ENCODE measurements at regions of chr2 and their contacts with region 1.

Region 1: DNA sequence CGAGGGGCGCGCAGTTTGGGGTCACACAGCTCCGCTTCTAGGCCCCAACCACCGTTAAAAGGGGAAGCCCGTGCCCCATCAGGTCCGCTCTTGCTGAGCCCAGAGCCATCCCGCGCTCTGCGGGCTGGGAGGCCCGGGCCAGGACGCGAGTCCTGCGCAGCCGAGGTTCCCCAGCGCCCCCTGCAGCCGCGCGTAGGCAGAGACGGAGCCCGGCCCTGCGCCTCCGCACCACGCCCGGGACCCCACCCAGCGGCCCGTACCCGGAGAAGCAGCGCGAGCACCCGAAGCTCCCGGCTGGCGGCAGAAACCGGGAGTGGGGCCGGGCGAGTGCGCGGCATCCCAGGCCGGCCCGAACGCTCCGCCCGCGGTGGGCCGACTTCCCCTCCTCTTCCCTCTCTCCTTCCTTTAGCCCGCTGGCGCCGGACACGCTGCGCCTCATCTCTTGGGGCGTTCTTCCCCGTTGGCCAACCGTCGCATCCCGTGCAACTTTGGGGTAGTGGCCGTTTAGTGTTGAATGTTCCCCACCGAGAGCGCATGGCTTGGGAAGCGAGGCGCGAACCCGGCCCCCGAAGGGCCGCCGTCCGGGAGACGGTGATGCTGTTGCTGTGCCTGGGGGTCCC is at the start of gene ITGA4:
- DNase-seq: peak; percentile 92
- ATAC-seq: peak; percentile 82
- H3K4me3 Mint-ChIP-seq: peak within 1 kb of the TSS; percentile 99
- H3K27ac Mint-ChIP-seq: peak within 1 kb of the TSS; percentile 97
- H3K4me1 Mint-ChIP-seq: peaks cover 30% of the 10 kb centered on the region
- H3K27me3 Mint-ChIP-seq: no peaks in the 10 kb centered on the region
- total RNA-seq, gene ITGA4: 301 to 344 TPM

Region 2: GRCh38 chr2:181123798-181124231 is 333.4 kb before region 1 on chr2:
- CTCF ChIA-PET with region 1: interaction called, 16 read pairs
- DNase-seq: peak; percentile 89
- ATAC-seq: peak; percentile 88
- H3K4me3 Mint-ChIP-seq: peak overlapping the region; percentile 73
- H3K27ac Mint-ChIP-seq: peak overlapping the region; percentile 92
- H3K4me1 Mint-ChIP-seq: peaks cover 72% of the 10 kb centered on the region
- H3K27me3 Mint-ChIP-seq: no peaks in the 10 kb centered on the region

Region 3: GRCh38 chr2:181146171-181146570 is 311.1 kb before region 1 on chr2:
- CTCF ChIA-PET with region 1: interaction called, 10 read pairs
- DNase-seq: peak; percentile 65
- ATAC-seq: peak; percentile 59
- H3K4me3 Mint-ChIP-seq: peak overlapping the region; percentile 18
- H3K27ac Mint-ChIP-seq: peak overlapping the region; percentile 86
- H3K4me1 Mint-ChIP-seq: peaks cover 68% of the 10 kb centered on the region
- H3K27me3 Mint-ChIP-seq: no peaks in the 10 kb centered on the region

Region 4: GRCh38 chr2:181305301-181306123 is 151.7 kb before region 1 on chr2:
- CTCF ChIA-PET with region 1: interaction called, 68 read pairs
- DNase-seq: peak; percentile 89
- ATAC-seq: peak; percentile 80
- H3K4me3 Mint-ChIP-seq: peak overlapping the region; percentile 59
- H3K27ac Mint-ChIP-seq: peak overlapping the region; percentile 95
- H3K4me1 Mint-ChIP-seq: peaks cover 77% of the 10 kb centered on the region
- H3K27me3 Mint-ChIP-seq: no peaks in the 10 kb centered on the region

Region 5: GRCh38 chr2:181312515-181312927 is 144.7 kb before region 1 on chr2:
- CTCF ChIA-PET with region 1: interaction called, 68 read pairs
- DNase-seq: peak; percentile 90
- ATAC-seq: peak; percentile 74
- H3K4me3 Mint-ChIP-seq: peak overlapping the region; percentile 75
- H3K27ac Mint-ChIP-seq: peak overlapping the region; percentile 99
- H3K4me1 Mint-ChIP-seq: peaks cover 53% of the 10 kb centered on the region
- H3K27me3 Mint-ChIP-seq: no peaks in the 10 kb centered on the region

Region 6: GRCh38 chr2:181394741-181395437 is 62.3 kb before region 1 on chr2:
- CTCF ChIA-PET with region 1: interaction called, 10 read pairs
- DNase-seq: no peak
- ATAC-seq: peak; percentile 67
- H3K4me3 Mint-ChIP-seq: peak overlapping the region; percentile 54
- H3K27ac Mint-ChIP-seq: peak overlapping the region; percentile 81
- H3K4me1 Mint-ChIP-seq: peaks cover 29% of the 10 kb centered on the region
- H3K27me3 Mint-ChIP-seq: no peaks in the 10 kb centered on the region

Region 7: DNA sequence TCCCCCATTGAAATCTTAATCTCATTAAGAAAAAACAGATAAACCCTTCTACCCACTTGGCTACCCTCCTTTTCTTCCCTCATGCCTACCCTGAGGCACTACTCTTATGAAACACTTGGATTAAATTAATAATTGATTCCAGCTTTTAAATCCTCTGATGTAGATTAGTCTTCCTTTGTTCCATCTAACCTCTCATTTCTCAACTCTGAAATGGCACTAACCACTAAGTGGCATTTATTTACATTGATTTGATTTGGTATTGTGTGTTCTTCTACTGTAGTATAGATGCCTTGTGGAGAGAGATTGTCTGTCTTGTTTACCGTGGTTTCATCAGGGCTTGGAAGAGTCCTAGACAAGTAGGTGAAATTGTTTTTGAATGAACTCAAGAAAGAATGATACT is 26.6 kb after region 1 on chr2:
- CTCF ChIA-PET with region 1: no interaction called
- DNase-seq: no peak
- ATAC-seq: no peak
- H3K4me3 Mint-ChIP-seq: no peak overlapping the region
- H3K27ac Mint-ChIP-seq: no peak overlapping the region
- H3K4me1 Mint-ChIP-seq: peaks cover 15% of the 10 kb centered on the region
- H3K27me3 Mint-ChIP-seq: no peaks in the 10 kb centered on the region

Region 8: DNA sequence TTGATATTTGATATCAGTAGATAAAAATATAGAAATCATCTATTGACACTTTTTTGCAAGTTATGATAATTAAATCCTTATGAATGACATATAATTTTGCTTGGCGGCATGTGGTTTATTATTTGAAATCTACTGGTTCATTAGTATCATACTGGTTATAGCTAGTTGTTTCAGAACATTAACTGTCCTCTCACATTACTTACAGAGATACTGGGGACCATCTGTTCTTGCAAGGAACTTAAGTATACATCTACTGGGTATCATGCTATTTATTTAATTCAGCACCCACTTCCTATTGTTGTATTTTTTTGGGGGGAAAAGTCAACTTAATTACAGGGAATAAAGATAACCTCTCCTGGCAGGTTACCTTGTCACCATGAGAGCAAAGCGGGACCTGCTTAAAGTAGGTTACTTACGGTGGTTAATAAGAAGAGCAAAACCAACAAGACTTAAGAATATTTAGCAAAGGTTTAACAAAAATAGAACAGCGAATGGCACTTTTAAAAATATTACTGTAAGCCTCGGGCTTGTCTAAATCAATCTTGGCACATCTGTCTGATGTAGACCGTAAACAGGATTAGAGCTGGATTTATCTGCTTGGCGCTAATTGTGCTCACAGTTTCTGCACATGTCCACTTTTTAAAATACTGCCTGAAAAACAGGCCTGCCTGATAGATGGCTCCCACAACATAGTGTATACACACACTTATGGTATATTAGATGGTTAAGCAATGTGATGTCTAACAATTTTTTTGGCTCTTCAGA is 157.8 kb after region 1 on chr2:
- CTCF ChIA-PET with region 1: no interaction called
- DNase-seq: no peak
- ATAC-seq: no peak
- H3K4me3 Mint-ChIP-seq: no peak overlapping the region
- H3K27ac Mint-ChIP-seq: no peak overlapping the region
- H3K4me1 Mint-ChIP-seq: no peaks in the 10 kb centered on the region
- H3K27me3 Mint-ChIP-seq: peaks cover 18% of the 10 kb centered on the region

Measured in activated CD8-positive, alpha-beta memory T cell treated with anti-CD3 and anti-CD28 coated beads, Interleukin-2, amount 10 ng/mL, durations not matched to agents 7 days and 5 days (primary cell).